Ascending aorta (tissue), 2 donors: ENCODE measurements at regions of chr3 and their contacts with region 1.

Region 1: DNA sequence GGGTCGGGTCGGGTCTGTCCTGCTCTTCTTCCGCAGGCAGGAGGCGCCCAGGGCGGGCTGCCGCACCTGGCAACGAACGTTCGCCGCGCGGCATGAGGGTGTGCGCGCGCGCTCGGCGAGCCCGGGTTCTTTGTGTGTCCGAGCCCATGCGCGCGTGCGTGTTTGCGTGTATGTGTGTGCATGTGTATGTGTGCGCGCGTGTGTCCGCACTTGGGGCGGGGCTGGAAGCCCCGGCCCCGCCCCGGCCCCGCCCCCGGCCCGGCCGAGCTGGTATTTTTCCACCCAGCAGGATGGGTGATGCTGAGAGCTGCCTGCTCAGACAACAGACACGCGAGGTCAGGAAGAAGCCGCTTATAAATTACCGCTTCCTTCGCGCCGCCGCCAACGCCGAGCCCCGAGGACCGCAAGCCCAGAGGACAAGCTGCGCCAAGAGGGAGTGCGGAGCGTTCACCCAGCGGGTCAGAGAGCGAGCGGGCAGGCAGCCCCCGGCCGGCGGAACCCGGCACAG is at the start of gene SLC6A6:
- DNase-seq: peak; percentile 88 to 98
- H3K4me3 ChIP-seq: peak within 1 kb of the TSS; percentile 62 to 85
- H3K27ac ChIP-seq: peak within 1 kb of the TSS; percentile 77 to 85
- H3K4me1 ChIP-seq: peaks cover 25 to 33% of the 10 kb centered on the region in 2 donors
- H3K27me3 ChIP-seq: no peaks in the 10 kb centered on the region
- CTCF ChIP-seq: peak in 2 of 3 experiments; percentile 39 to 52
- total RNA-seq, gene SLC6A6: 78.1 TPM

Region 2: DNA sequence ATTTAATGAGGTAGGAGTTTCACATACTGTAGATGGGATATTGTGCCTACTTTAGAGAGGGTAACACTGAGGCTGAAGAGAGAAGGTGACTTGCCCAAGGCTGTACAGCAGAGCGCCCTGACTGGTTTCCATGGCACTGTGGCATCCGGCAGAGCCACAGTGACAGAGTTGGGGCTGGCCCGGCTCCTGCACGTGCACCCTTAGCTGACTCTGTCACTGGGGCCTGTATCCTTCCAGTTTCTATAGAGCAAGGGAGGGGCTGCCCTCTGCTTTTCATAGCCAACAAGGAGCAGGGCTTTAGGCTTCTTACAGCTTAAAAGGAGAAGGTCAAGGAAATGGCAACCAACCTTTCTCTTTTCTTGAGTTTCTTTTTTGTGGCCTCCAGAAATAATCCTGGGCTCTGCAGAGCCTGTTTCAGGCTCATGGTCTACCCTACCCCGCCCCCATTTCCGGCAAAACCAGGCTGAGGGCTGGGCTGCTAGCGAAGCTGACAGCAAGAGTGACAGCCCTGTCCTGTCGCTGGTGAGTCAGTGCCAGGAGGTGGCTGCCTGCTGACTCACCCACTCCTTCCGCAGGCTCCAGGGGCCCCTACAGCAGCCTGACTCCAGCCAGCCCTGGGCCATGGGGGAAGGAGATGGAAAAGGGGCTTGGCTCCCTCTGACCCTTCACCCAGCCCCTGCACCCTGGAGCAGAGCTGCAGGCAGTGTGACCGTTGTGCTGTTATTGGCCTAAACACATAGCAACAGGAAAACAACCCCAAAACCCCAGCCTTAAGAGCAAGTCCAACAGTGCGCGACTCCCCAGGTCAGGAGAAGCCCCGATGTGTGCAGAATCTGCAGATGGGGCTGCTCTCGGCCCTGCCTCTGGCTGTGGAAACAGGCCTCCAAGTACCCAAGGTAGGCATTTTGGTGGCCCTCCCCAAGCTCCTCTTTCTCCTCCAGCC is 29.8 kb after region 1 on chr3:
- intact Hi-C with region 1: loop called (anchors 1 kb)
- DNase-seq: peak; percentile 90 to 96
- H3K4me3 ChIP-seq: no peak overlapping the region
- H3K27ac ChIP-seq: peak overlapping the region; percentile 77 to 82
- H3K4me1 ChIP-seq: peaks cover 25% of the 10 kb centered on the region in 2 donors
- H3K27me3 ChIP-seq: no peaks in the 10 kb centered on the region
- CTCF ChIP-seq: no peak

Region 3: GRCh38 chr3:14461748-14462324 is 59.5 kb after region 1 on chr3:
- intact Hi-C with region 1: loop called (anchors 2 kb)
- DNase-seq: no peak
- H3K4me3 ChIP-seq: no peak overlapping the region
- H3K27ac ChIP-seq: no peak overlapping the region
- H3K4me1 ChIP-seq: peaks cover 7 to 18% of the 10 kb centered on the region in 2 donors
- H3K27me3 ChIP-seq: no peaks in the 10 kb centered on the region
- CTCF ChIP-seq: peak; percentile 50 to 66 (median 63)

Region 4: DNA sequence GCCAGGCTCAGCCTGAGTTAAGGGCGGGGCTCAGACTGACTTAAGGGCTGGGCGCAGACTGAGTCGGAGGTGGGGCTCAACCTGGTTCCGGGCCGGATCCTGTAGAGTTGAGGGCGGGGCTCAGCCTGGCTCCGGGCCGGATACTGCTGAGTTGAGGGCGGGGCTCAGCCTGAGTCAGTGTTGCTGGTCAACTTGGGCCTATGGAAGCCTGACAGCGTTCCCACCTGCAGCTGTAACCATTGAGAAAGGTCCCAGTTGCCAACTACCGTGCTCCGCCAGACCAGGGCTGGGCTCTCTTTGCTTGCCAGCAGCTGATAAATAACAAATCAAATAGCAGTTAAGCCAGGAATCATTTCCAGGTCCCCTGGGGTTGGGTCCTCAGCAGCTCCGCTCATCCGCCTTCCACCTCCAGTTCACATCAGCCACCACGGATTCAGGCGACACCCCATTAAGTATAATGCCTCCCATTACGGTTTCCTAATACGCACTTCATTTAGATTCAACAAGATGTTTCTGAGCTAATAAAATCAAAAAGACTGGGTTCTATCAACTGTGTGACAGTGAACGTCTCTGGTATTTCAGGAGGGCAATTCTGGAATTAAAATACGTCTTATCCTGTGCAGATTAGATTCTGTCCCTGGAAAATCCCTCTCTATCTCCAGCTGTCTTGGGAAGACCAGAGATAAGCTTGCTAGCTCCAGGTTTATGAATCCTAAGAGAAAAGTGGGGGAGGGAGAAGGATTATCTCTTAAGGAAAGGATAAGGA is 130.5 kb after region 1 on chr3:
- intact Hi-C with region 1: no loop called
- DNase-seq: no peak
- H3K4me3 ChIP-seq: no peak overlapping the region
- H3K27ac ChIP-seq: no peak overlapping the region
- H3K4me1 ChIP-seq: no peaks in the 10 kb centered on the region
- H3K27me3 ChIP-seq: no peaks in the 10 kb centered on the region
- CTCF ChIP-seq: no peak